ENCODE measurements at regions of chr14 and their contacts with region 1.

Region 1: GRCh38 chr14:88005978-88006851 is 1.3 kb downstream of the GPR65 start:
- DNase-seq: peak; percentile 82 to 92 (median 87)
- H3K4me3 ChIP-seq: peak overlapping the region; percentile 49 to 73
- H3K4me3 Mint-ChIP-seq: peak overlapping the region; percentile 77 to 97 (median 88)
- H3K27ac ChIP-seq: peak overlapping the region; percentile 88
- H3K27ac Mint-ChIP-seq: peak overlapping the region; percentile 97 to 99 (median 99)
- H3K4me1 ChIP-seq: peaks cover 56% of the 10 kb centered on the region
- H3K4me1 Mint-ChIP-seq: peaks cover 42 to 74% (median 54%) of the 10 kb centered on the region in 4 donors
- H3K27me3 ChIP-seq: no peaks in the 10 kb centered on the region
- H3K27me3 Mint-ChIP-seq: no peaks in the 10 kb centered on the region

Region 2: GRCh38 chr14:87952307-87953094 is 53.7 kb before region 1 on chr14:
- CTCF ChIA-PET with region 1: interaction called, 15 read pairs
- POLR2A ChIA-PET with region 1: interaction called, 41 read pairs
- intact Hi-C with region 1: no loop called
- DNase-seq: peak; percentile 13 to 58 (median 45)
- H3K4me3 ChIP-seq: no peak overlapping the region
- H3K4me3 Mint-ChIP-seq: peak overlapping the region; percentile 67 to 92 (median 86)
- H3K27ac ChIP-seq: peak overlapping the region; percentile 47
- H3K27ac Mint-ChIP-seq: peak overlapping the region; percentile 88 to 97 (median 93)
- H3K4me1 ChIP-seq: peaks cover 53% of the 10 kb centered on the region
- H3K4me1 Mint-ChIP-seq: peaks cover 41 to 69% (median 57%) of the 10 kb centered on the region in 4 donors
- H3K27me3 ChIP-seq: no peaks in the 10 kb centered on the region
- H3K27me3 Mint-ChIP-seq: no peaks in the 10 kb centered on the region

Region 3: GRCh38 chr14:88023658-88024187 is 17.5 kb after region 1 on chr14:
- CTCF ChIA-PET with region 1: interaction called, 3 read pairs
- POLR2A ChIA-PET with region 1: interaction called, 14 read pairs
- intact Hi-C with region 1: loop called (anchors 1 kb)
- DNase-seq: peak in 4 of 5 donors; percentile 20 to 39 (median 34)
- H3K4me3 ChIP-seq: no peak overlapping the region
- H3K4me3 Mint-ChIP-seq: peak overlapping the region in 7 of 8 donors; percentile 25 to 74 (median 50)
- H3K27ac ChIP-seq: no peak overlapping the region
- H3K27ac Mint-ChIP-seq: peak overlapping the region; percentile 47 to 91 (median 84)
- H3K4me1 ChIP-seq: peaks cover 70% of the 10 kb centered on the region
- H3K4me1 Mint-ChIP-seq: peaks cover 55 to 84% (median 73%) of the 10 kb centered on the region in 4 donors
- H3K27me3 ChIP-seq: no peaks in the 10 kb centered on the region
- H3K27me3 Mint-ChIP-seq: no peaks in the 10 kb centered on the region

Region 4: GRCh38 chr14:88321692-88322503 is 315.7 kb after region 1 on chr14:
- CTCF ChIA-PET with region 1: no interaction called
- POLR2A ChIA-PET with region 1: no interaction called
- intact Hi-C with region 1: no loop called
- DNase-seq: no peak
- H3K4me3 ChIP-seq: no peak overlapping the region
- H3K4me3 Mint-ChIP-seq: no peak overlapping the region
- H3K27ac ChIP-seq: no peak overlapping the region
- H3K27ac Mint-ChIP-seq: no peak overlapping the region
- H3K4me1 ChIP-seq: no peaks in the 10 kb centered on the region
- H3K4me1 Mint-ChIP-seq: peaks cover 0 to 8% (median 4%) of the 10 kb centered on the region in 4 donors
- H3K27me3 ChIP-seq: peaks cover 19% of the 10 kb centered on the region
- H3K27me3 Mint-ChIP-seq: peaks cover 17 to 37% of the 10 kb centered on the region in 2 donors

Region 5: GRCh38 chr14:88551094-88551870 is 545.1 kb after region 1 on chr14:
- CTCF ChIA-PET with region 1: no interaction called
- POLR2A ChIA-PET with region 1: no interaction called
- intact Hi-C with region 1: loop called (anchors 5 kb)
- DNase-seq: peak in 1 of 5 donors; percentile 19
- H3K4me3 ChIP-seq: peak overlapping the region in 1 of 2 donors; percentile 30
- H3K4me3 Mint-ChIP-seq: peak overlapping the region; percentile 45 to 77 (median 66)
- H3K27ac ChIP-seq: no peak overlapping the region
- H3K27ac Mint-ChIP-seq: no peak overlapping the region
- H3K4me1 ChIP-seq: peaks cover 15% of the 10 kb centered on the region
- H3K4me1 Mint-ChIP-seq: peaks cover 10 to 20% (median 16%) of the 10 kb centered on the region in 4 donors
- H3K27me3 ChIP-seq: peaks cover 48% of the 10 kb centered on the region
- H3K27me3 Mint-ChIP-seq: peaks cover 26 to 30% of the 10 kb centered on the region in 2 donors